ENCODE measurements at regions of chr20 and their contacts with region 1.

Region 1: GRCh38 chr20:33666293-33667244 is at the start of gene ACTL10:
- DNase-seq: peak; percentile 96
- ATAC-seq: peak; percentile 77
- H3K4me3 ChIP-seq: peak within 1 kb of the TSS; percentile 29
- H3K27ac ChIP-seq: peak within 1 kb of the TSS; percentile 63
- H3K4me1 ChIP-seq: peaks cover 19% of the 10 kb centered on the region
- H3K27me3 ChIP-seq: no peaks in the 10 kb centered on the region
- CTCF ChIP-seq: peak; percentile 53
- POLR2A ChIP-seq: no peak
- RAD21 ChIP-seq: peak; percentile 31
- total RNA-seq, gene ACTL10: 0.18 and 0.28 TPM in 2 replicates

Region 2: GRCh38 chr20:32433311-32434021 is 1233.1 kb before region 1 on chr20:
- CTCF ChIA-PET with region 1: no interaction called
- POLR2A ChIA-PET with region 1: no interaction called
- dilution Hi-C with region 1: no loop called
- in situ Hi-C with region 1: no loop called
- intact Hi-C with region 1: no loop called
- DNase-seq: no peak
- ATAC-seq: no peak
- H3K4me3 ChIP-seq: no peak overlapping the region
- H3K27ac ChIP-seq: no peak overlapping the region
- H3K4me1 ChIP-seq: peaks cover under 1% of the 10 kb centered on the region; the same call in 1 of the 2 replicates
- H3K27me3 ChIP-seq: no peaks in the 10 kb centered on the region
- CTCF ChIP-seq: no peak
- POLR2A ChIP-seq: no peak
- RAD21 ChIP-seq: no peak

Region 3: DNA sequence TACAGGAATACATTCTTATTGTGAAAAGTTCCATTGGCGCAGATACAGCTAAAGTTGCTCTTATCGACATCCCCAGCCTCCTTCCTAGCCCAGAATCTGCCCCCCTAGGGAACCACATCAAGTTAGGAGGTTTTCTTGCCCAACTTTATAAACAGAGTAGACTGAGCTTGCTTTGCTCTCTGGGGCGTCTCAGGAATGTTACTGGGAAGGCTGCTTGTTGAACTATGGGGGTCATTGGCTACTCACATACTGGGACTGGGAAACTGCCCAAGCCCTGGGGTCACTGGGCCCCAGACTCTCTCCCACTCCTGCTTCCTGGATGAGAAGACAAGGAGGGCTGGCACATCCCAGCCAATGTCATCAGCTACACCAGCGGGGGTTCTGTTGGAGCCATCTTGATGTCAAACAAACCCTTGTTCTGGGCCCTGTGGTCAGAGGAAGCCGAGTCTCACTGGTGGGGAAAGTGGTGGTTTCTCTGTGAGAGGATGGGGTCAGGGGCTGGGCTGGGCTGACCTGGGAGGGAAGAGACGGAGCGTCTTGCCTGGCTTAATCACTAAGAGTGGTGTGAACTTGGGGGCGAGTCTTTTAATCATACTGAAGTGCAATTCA is 561.1 kb before region 1 on chr20:
- CTCF ChIA-PET with region 1: no interaction called
- POLR2A ChIA-PET with region 1: no interaction called
- dilution Hi-C with region 1: no loop called
- in situ Hi-C with region 1: no loop called
- intact Hi-C with region 1: no loop called
- DNase-seq: no peak
- ATAC-seq: no peak
- H3K4me3 ChIP-seq: no peak overlapping the region
- H3K27ac ChIP-seq: no peak overlapping the region
- H3K4me1 ChIP-seq: no peaks in the 10 kb centered on the region
- H3K27me3 ChIP-seq: peaks cover 3% of the 10 kb centered on the region; the same call in 1 of the 2 replicates
- CTCF ChIP-seq: no peak
- POLR2A ChIP-seq: no peak
- RAD21 ChIP-seq: no peak

Region 4: GRCh38 chr20:33773412-33774089 is 107.0 kb after region 1 on chr20:
- CTCF ChIA-PET with region 1: no interaction called
- POLR2A ChIA-PET with region 1: no interaction called
- dilution Hi-C with region 1: no loop called
- in situ Hi-C with region 1: no loop called
- intact Hi-C with region 1: no loop called
- DNase-seq: no peak
- ATAC-seq: no peak
- H3K4me3 ChIP-seq: no peak overlapping the region
- H3K27ac ChIP-seq: no peak overlapping the region
- H3K4me1 ChIP-seq: no peaks in the 10 kb centered on the region
- H3K27me3 ChIP-seq: no peaks in the 10 kb centered on the region
- CTCF ChIP-seq: no peak
- POLR2A ChIP-seq: no peak
- RAD21 ChIP-seq: no peak

Region 5: DNA sequence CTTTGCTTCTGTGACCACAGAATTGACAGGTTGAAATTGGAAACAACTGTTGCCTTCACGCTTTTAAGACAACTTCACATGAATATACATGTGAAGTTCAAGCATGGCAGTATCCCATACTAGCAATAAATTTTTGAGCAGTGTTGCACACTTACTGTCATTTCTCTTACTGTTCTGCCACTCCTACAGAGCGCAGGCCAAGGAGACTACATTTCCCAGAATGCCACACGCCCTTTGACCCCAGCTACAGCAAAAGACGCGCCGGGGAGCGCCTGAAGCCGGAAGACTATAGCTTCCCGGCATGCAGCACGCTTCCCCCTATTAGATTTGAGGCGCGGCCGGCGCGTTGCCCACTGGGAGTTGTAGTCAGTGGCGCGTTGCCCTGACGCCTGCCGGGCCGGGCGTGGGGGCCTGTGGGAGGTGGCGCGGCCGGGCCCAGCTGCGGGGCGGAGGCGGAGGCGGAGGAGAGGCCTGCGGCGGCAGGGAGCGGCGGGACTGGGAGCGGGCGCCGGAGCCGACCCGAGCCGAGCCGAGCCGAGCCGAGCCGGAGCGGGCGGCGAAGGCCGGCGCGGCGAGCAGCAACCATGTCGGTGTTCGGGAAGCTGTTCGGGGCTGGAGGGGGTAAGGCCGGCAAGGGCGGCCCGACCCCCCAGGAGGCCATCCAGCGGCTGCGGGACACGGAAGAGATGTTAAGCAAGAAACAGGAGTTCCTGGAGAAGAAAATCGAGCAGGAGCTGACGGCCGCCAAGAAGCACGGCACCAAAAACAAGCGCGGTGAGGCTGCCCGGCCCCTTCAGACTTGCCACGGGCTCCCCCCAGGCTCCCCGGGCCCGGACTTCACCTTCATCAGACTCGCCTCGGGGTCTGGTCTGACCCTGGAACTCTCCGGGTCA is 144.6 kb after region 1 on chr20 and contains the start of gene CHMP4B:
- CTCF ChIA-PET with region 1: no interaction called
- POLR2A ChIA-PET with region 1: no interaction called
- dilution Hi-C with region 1: no loop called
- in situ Hi-C with region 1: no loop called
- intact Hi-C with region 1: loop called (anchors 10 kb)
- DNase-seq: peak; percentile 98
- ATAC-seq: peak; percentile 97
- H3K4me3 ChIP-seq: peak within 1 kb of the TSS; percentile 90
- H3K27ac ChIP-seq: peak within 1 kb of the TSS; percentile 98
- H3K4me1 ChIP-seq: peaks cover 7% of the 10 kb centered on the region
- H3K27me3 ChIP-seq: no peaks in the 10 kb centered on the region
- CTCF ChIP-seq: no peak
- POLR2A ChIP-seq: peak; percentile 89
- RAD21 ChIP-seq: no peak
- total RNA-seq, gene CHMP4B: 30.3 and 40.5 TPM in 2 replicates

Region 6: DNA sequence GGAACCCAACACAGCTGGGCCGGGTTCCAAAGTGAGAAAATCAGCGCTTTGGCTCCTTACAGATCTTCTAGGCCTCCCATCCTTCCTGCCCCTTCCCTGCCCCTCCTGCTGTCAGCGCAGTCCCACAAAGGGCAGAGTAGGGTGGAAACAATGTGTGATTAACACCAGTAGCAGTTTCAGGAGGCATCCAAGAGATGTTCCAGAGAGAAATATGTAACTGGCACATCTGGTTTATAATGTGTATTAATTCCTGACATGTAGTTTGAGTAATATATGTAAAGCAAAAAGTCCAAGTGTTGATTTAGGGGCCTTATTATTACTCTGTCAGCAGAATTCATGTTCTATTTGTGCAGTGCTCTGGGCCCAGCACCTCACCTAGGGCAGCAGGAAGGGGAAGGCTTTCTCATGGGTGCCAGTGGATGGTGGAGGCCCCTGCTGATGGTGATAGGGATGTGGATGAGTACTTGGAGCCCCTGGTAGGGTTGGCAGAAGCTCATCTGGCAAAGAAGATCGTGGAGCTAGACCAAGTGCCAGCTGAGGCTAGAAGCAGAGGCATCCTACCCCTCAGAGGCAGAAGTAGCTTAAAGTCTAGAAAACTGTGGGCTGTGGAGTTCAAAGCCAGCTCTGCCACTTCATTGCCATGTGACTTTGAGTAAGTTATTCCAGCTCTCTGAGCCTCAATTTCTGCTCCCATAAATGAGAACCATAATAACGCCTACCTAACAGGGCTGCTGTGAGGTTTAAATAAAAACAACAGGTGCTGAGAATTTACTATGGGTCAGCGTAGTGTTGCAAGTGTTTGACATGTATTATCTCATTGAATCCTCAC is 304.8 kb after region 1 on chr20:
- CTCF ChIA-PET with region 1: no interaction called
- POLR2A ChIA-PET with region 1: interaction called, 17 read pairs
- dilution Hi-C with region 1: no loop called
- in situ Hi-C with region 1: no loop called
- intact Hi-C with region 1: no loop called
- DNase-seq: no peak
- ATAC-seq: no peak
- H3K4me3 ChIP-seq: no peak overlapping the region
- H3K27ac ChIP-seq: no peak overlapping the region
- H3K4me1 ChIP-seq: no peaks in the 10 kb centered on the region
- H3K27me3 ChIP-seq: peaks cover 2% of the 10 kb centered on the region
- CTCF ChIP-seq: no peak
- POLR2A ChIP-seq: no peak
- RAD21 ChIP-seq: no peak